ENCODE measurements at regions of chr17 and their contacts with region 1.

Region 1: GRCh38 chr17:47889734-47890529 is 6.1 kb upstream of the SP2 start:
- DNase-seq: peak; percentile 71 to 74
- H3K4me3 ChIP-seq: no peak overlapping the region
- H3K27ac ChIP-seq: no peak overlapping the region
- H3K4me1 ChIP-seq: peaks cover 63% of the 10 kb centered on the region
- H3K27me3 ChIP-seq: no peaks in the 10 kb centered on the region
- CTCF ChIP-seq: peak; percentile 95

Region 2: GRCh38 chr17:47649153-47649971 is 240.6 kb before region 1 on chr17 and contains the start of gene KPNB1:
- CTCF ChIA-PET with region 1: no interaction called
- POLR2A ChIA-PET with region 1: no interaction called
- intact Hi-C with region 1: no loop called
- DNase-seq: peak; percentile 99
- H3K4me3 ChIP-seq: peak within 1 kb of the TSS; percentile 98
- H3K27ac ChIP-seq: peak within 1 kb of the TSS; percentile 82
- H3K4me1 ChIP-seq: peaks cover 20% of the 10 kb centered on the region
- H3K27me3 ChIP-seq: no peaks in the 10 kb centered on the region
- CTCF ChIP-seq: no peak
- total RNA-seq, gene KPNB1: 305 and 306 TPM in 2 replicates

Region 3: GRCh38 chr17:47850692-47851573 is 39.0 kb before region 1 on chr17 and contains the start of gene SP6:
- CTCF ChIA-PET with region 1: interaction called, 10 read pairs
- POLR2A ChIA-PET with region 1: interaction called, 6 read pairs
- intact Hi-C with region 1: loop called (anchors 1 kb)
- DNase-seq: peak; percentile 86 to 88
- H3K4me3 ChIP-seq: peak within 1 kb of the TSS; percentile 72
- H3K27ac ChIP-seq: peak within 1 kb of the TSS; percentile 55
- H3K4me1 ChIP-seq: peaks cover 33% of the 10 kb centered on the region
- H3K27me3 ChIP-seq: no peaks in the 10 kb centered on the region
- CTCF ChIP-seq: no peak; the same call in 1 of the 2 replicates
- total RNA-seq, gene SP6: 13.3 and 14.9 TPM in 2 replicates

Region 4: GRCh38 chr17:47929218-47930000 is 39.5 kb after region 1 on chr17:
- CTCF ChIA-PET with region 1: no interaction called
- POLR2A ChIA-PET with region 1: no interaction called
- intact Hi-C with region 1: no loop called
- DNase-seq: no peak
- H3K4me3 ChIP-seq: no peak overlapping the region
- H3K27ac ChIP-seq: no peak overlapping the region
- H3K4me1 ChIP-seq: peaks cover 1% of the 10 kb centered on the region; the same call in 1 of the 2 replicates
- H3K27me3 ChIP-seq: no peaks in the 10 kb centered on the region
- CTCF ChIP-seq: no peak